ENCODE measurements at regions of chr13 and their contacts with region 1.

Region 1: DNA sequence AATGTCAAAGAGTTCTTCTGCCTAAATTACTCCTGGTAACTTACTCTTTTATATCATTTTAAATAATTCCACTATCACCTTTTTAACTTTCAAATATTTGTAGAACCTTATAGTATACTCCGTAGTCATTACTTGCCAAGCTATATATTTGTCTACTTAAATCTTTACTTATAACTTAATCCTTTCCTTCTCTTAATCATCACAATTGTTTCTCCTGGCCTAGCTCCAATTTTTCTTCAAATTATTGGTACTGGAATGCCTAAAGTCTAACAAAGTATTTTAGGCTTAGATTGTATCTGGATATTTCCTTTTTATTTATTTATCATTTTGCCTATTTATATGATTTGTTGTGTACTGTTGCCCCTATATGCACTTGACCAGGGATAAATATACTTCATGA is 109.5 kb downstream of the MZT1 start:
- DNase-seq: no peak
- H3K4me3 ChIP-seq: no peak overlapping the region
- H3K27ac ChIP-seq: no peak overlapping the region
- H3K4me1 ChIP-seq: no peaks in the 10 kb centered on the region
- H3K27me3 ChIP-seq: no peaks in the 10 kb centered on the region
- CTCF ChIP-seq: no peak
- EP300 ChIP-seq: no peak
- POLR2A ChIP-seq: no peak

Region 2: DNA sequence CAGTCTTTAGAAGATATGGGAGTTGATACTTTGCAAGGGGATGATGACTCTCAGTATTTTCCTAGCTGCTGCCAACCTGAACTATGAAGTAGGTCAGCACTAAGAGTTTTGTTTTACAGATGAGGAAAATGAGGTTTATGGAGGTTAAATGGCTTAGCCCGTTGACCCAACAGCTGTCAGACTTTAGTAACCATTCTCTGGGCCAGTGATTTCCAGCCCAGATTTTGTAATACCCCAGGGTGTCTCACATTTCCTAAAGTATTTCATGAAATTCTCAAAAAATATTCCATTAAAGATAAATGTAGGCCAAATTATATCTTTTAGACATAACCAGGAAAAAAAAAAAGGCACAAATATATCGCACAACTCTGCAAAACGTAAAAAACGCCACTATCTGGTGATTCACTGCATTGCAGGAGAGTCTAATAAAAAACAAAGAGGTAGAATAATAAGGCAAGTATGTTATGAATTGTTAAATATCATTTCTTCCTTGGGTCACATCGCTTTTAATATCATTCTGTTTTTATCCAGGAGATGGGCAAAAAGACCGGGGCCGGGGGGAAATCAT is 863.5 kb before region 1 on chr13:
- in situ Hi-C with region 1: no loop called
- intact Hi-C with region 1: loop called (anchors 5 kb)
- DNase-seq: no peak
- H3K4me3 ChIP-seq: no peak overlapping the region
- H3K27ac ChIP-seq: no peak overlapping the region
- H3K4me1 ChIP-seq: peaks cover 0 to 7% (median 0%) of the 10 kb centered on the region in 4 donors
- H3K27me3 ChIP-seq: no peaks in the 10 kb centered on the region
- CTCF ChIP-seq: no peak
- EP300 ChIP-seq: no peak
- POLR2A ChIP-seq: no peak

Region 3: GRCh38 chr13:72151241-72151640 is 466.7 kb before region 1 on chr13:
- in situ Hi-C with region 1: no loop called
- intact Hi-C with region 1: no loop called
- DNase-seq: no peak
- H3K4me3 ChIP-seq: no peak overlapping the region
- H3K27ac ChIP-seq: no peak overlapping the region
- H3K4me1 ChIP-seq: no peaks in the 10 kb centered on the region
- H3K27me3 ChIP-seq: no peaks in the 10 kb centered on the region
- CTCF ChIP-seq: no peak
- EP300 ChIP-seq: no peak
- POLR2A ChIP-seq: no peak

Region 4: DNA sequence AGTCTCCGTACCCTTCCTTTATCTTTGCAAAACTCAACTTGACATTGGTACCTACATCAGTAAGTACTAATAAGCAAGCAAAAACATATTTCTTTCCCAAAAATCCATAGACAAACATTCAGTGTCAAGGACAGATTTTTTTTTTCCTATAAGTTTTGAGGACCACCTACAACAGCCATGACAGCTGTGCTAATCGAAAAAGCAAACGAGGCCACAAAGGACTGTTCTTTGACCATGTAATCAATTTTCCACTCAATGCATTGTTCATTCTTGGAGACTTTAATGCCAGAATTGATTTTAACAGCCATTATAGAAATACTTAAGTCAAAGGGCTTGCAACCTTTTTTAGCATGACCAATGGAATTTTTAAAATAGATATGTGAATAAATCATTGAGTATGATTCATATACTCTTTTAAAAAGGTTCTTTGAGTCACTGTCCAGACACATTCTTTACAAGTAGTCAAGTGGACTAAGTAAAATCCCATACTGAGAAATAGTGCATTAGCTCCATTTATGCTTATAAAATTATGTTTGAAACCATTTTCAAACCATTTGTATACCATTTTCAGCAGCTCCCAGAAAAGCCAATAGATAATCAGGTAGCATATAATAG is 214.4 kb before region 1 on chr13:
- in situ Hi-C with region 1: no loop called
- intact Hi-C with region 1: no loop called
- DNase-seq: no peak
- H3K4me3 ChIP-seq: no peak overlapping the region
- H3K27ac ChIP-seq: no peak overlapping the region
- H3K4me1 ChIP-seq: no peaks in the 10 kb centered on the region
- H3K27me3 ChIP-seq: no peaks in the 10 kb centered on the region
- CTCF ChIP-seq: no peak
- EP300 ChIP-seq: no peak
- POLR2A ChIP-seq: no peak